Activated B cell treated with CpG ODN at 0.5 μM for 24 hours (primary cell): ENCODE measurements at regions of chr11 and their contacts with region 1.

Region 1: GRCh38 chr11:67353317-67354074 is at the start of gene POLD4:
- DNase-seq: peak; percentile 98
- ATAC-seq: peak; percentile 78
- H3K4me3 Mint-ChIP-seq: peak within 1 kb of the TSS; percentile 95
- H3K27ac Mint-ChIP-seq: peak within 1 kb of the TSS; percentile 99
- H3K4me1 Mint-ChIP-seq: peaks cover 89% of the 10 kb centered on the region
- H3K27me3 Mint-ChIP-seq: no peaks in the 10 kb centered on the region
- CTCF ChIP-seq: no peak
- total RNA-seq, gene POLD4: 166 and 169 TPM in 2 replicates

Region 2: DNA sequence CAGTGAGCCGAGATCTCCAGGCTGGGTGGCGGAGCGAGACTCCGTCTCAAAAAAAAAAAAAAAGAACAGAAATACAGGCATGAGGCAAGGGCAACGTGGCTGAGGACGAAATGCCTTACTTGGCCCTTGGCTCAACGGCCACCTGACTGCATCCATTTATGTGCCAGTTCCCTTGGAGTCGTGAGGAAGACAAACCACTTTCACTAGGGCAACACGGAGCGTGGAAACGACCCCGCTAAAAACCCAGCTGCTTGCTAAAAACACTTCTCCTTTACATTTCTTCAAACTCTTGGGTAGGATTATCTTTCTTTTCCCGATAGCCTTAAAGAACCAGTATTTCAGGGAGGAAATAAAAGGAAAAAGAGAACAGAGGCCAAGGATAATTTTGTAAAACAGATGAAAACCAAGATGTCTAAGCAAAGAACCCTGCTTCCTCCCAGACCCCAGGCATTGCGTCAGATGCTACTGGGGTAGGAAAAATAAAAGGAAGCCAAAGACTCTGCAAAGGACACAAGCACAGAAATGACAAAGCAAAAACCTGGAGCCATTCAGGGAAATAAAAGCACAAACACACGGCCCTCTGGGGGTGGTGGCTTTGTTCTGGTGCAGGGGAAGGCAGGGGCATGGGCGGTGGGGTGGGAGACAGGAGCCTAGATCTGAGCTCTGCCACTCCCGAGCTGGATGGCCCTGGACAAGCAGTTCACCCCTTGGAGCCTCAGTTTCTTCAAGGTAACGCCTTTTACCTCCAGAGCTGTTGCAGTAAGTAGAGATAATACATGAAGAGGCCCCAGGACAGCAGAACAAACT is 432.3 kb before region 1 on chr11:
- CTCF ChIA-PET with region 1: no interaction called
- POLR2A ChIA-PET with region 1: no interaction called
- intact Hi-C with region 1: no loop called
- DNase-seq: no peak
- ATAC-seq: no peak
- H3K4me3 Mint-ChIP-seq: no peak overlapping the region
- H3K27ac Mint-ChIP-seq: no peak overlapping the region
- H3K4me1 Mint-ChIP-seq: no peaks in the 10 kb centered on the region
- H3K27me3 Mint-ChIP-seq: peaks cover 6% of the 10 kb centered on the region
- CTCF ChIP-seq: no peak

Region 3: DNA sequence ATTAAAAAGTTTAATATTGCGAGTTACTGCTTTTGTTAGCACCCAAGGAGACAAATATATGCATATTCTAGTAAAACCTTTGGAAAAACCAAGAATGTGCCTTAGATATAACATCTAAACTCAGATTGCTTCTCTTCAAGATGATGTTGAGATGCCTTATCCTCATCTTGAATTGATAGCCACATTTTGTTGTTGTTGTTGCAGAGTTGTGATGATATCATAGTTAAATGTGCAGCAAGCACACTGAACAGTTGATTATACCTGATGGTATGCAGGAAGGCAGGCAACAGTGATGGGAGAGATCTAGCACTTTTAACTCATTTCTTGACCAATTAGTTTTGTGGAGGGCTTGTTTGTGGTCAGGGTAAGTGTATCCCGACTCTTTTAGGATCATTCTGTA is 186.4 kb before region 1 on chr11:
- CTCF ChIA-PET with region 1: no interaction called
- POLR2A ChIA-PET with region 1: no interaction called
- intact Hi-C with region 1: no loop called
- DNase-seq: no peak
- ATAC-seq: no peak
- H3K4me3 Mint-ChIP-seq: no peak overlapping the region
- H3K27ac Mint-ChIP-seq: no peak overlapping the region
- H3K4me1 Mint-ChIP-seq: peaks cover 40% of the 10 kb centered on the region
- H3K27me3 Mint-ChIP-seq: no peaks in the 10 kb centered on the region
- CTCF ChIP-seq: no peak

Region 4: DNA sequence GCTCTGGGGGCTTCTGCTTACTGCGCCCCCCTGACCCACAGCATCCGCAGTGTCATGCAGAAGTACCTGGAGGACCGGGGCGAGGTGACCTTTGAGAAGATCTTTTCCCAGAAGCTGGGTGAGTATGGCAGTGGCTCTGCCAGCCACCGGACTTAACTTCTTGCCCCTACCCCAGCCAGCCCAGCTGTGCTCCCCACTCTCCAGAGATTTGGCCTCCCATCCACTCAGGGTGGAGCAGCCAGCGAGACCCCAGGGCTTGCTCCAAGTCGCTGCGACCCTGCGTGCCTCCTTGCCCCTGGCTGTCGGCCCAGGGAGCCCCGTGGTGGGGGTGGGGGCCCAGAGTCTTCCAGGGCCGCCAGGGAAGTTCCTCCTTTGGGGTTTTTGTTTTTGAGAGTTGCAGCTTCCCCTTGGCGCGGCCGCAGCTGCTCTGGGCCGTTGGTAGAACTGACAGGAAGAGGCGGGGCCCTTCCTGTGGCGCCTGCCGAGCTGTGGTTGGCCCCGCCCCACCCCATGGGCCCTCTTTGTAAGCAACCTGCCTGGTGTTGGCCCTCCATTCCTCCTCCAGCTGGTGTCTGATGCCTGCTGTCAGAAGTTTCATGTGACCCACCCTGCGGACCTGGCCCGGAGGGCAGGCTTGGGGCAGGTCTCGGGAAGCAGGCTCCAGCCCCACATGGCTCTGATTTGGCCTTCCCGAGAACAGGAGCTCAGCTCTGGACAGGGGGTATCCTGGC is 76.1 kb before region 1 on chr11:
- CTCF ChIA-PET with region 1: no interaction called
- POLR2A ChIA-PET with region 1: interaction called, 31 read pairs
- intact Hi-C with region 1: no loop called
- DNase-seq: peak; percentile 85
- ATAC-seq: peak; percentile 93
- H3K4me3 Mint-ChIP-seq: peak overlapping the region; percentile 59
- H3K27ac Mint-ChIP-seq: peak overlapping the region; percentile 98
- H3K4me1 Mint-ChIP-seq: peaks cover 85% of the 10 kb centered on the region
- H3K27me3 Mint-ChIP-seq: no peaks in the 10 kb centered on the region
- CTCF ChIP-seq: no peak

Region 5: DNA sequence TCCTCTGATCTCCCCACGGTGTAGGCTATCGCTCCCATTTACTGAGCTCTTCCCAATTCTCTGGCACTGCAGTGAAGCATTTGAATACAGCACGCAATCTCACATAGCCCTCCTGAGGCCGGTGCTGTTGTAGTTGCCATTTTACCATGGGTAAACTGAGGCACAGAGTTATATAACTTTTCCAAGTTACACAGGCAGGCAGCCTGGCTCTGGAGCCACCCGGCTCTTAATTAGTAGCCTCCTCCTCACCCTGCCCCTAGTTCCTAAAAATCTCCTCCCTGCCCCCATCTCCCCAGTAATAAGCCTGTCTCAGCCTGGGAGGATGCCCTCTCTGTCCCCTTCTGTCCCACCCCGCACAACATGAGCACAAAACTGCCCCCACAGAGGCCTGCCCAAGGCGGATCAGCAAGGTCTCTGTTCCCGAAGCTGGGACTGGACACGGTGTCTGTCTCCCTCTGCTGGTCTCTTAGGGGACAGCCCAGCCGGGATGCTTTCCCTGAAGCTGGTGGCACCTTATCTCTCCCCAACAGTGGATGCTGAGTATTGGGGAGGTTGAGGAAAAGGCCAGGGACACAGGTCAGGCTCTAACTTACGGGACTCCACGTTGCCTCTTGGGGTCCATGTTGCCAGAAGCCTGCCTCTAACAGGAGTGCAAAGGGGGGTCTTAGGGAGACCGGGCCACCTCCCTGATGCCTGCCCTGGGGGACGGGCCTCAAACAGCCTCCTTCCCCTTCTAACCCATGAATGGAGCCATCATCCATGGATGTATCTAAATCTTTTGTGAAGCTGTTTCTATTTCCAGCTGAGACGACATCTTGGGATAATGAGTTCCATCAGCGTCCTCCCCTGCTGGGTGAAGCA is 29.0 kb after region 1 on chr11:
- CTCF ChIA-PET with region 1: interaction called, 735 read pairs
- POLR2A ChIA-PET with region 1: interaction called, 1,307 read pairs
- intact Hi-C with region 1: loop called (anchors 1 kb)
- DNase-seq: peak; percentile 75
- ATAC-seq: peak; percentile 80
- H3K4me3 Mint-ChIP-seq: peak overlapping the region; percentile 70
- H3K27ac Mint-ChIP-seq: peak overlapping the region; percentile 90
- H3K4me1 Mint-ChIP-seq: peaks cover 31% of the 10 kb centered on the region
- H3K27me3 Mint-ChIP-seq: no peaks in the 10 kb centered on the region
- CTCF ChIP-seq: peak; percentile 47

Region 6: DNA sequence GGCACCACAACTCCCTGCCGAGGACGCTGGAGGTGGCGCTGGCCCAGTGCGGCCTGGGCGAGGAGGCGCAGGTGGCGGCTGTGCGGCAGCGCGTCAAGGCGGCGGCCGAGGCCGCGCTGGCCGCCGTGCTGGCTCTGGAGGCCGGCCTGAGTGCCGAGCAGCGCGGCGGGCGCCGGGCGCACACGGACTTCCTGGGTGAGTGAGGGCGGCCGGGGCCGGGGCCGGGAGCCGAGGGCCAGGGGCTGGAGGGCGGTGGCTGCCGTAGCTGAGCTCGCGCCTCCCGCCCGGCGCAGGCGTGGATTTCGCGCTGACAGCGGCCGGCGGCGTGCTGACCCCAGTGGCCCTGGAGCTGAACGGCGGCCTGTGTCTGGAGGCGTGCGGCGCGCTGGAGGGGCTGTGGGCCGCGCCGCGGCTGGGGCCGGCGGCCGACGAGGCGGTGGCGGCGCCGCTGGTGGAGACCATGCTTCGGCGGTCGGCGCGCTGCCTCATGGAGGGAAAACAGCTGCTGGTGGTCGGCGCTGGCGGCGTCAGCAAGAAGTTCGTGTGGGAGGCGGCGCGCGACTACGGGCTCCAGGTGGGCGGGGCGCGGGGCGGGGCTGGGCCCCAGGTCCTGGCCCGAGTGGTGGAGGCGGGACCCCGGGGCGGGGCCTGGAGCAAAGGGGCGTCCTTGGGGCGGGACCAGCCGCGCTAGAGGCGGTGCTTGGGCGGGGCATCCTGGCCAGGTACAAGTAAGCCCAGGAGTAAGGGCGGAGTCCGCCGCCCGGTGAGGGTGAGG is 67.3 kb after region 1 on chr11:
- CTCF ChIA-PET with region 1: interaction called, 4 read pairs
- POLR2A ChIA-PET with region 1: interaction called, 27 read pairs
- intact Hi-C with region 1: no loop called
- DNase-seq: peak; percentile 98
- ATAC-seq: peak; percentile 85
- H3K4me3 Mint-ChIP-seq: peak overlapping the region; percentile 79
- H3K27ac Mint-ChIP-seq: peak overlapping the region; percentile 83
- H3K4me1 Mint-ChIP-seq: peaks cover 52% of the 10 kb centered on the region
- H3K27me3 Mint-ChIP-seq: no peaks in the 10 kb centered on the region
- CTCF ChIP-seq: no peak

Region 7: GRCh38 chr11:67482825-67483798 is 129.6 kb after region 1 on chr11 and contains the start of gene AIP:
- CTCF ChIA-PET with region 1: no interaction called
- POLR2A ChIA-PET with region 1: interaction called, 15 read pairs
- intact Hi-C with region 1: loop called (anchors 1 kb)
- DNase-seq: peak; percentile 87
- ATAC-seq: peak; percentile 85
- H3K4me3 Mint-ChIP-seq: peak within 1 kb of the TSS; percentile 93
- H3K27ac Mint-ChIP-seq: peak within 1 kb of the TSS; percentile 98
- H3K4me1 Mint-ChIP-seq: peaks cover 58% of the 10 kb centered on the region
- H3K27me3 Mint-ChIP-seq: no peaks in the 10 kb centered on the region
- CTCF ChIP-seq: no peak
- total RNA-seq, gene AIP: 108 and 114 TPM in 2 replicates

Region 8: DNA sequence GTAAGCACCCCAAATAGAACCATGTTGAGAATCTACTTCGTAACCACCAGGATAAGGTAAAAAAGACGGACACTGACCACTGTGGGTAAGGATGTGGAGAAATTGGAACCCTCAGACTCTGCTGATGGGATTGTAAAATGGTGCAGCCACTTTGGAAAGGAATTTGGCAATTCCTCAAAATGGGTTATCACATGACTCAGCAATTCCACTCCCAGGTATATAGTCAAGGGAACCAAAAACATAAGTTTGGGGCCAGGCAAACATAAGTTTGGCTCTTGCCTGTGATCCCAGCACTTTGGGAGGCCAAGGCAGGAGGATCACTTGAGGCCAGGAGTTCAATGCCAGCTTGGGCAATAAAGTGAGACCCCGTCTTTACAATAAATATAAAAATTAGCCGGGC is 174.9 kb after region 1 on chr11:
- CTCF ChIA-PET with region 1: no interaction called
- POLR2A ChIA-PET with region 1: no interaction called
- intact Hi-C with region 1: no loop called
- DNase-seq: no peak
- ATAC-seq: no peak
- H3K4me3 Mint-ChIP-seq: no peak overlapping the region
- H3K27ac Mint-ChIP-seq: no peak overlapping the region
- H3K4me1 Mint-ChIP-seq: no peaks in the 10 kb centered on the region
- H3K27me3 Mint-ChIP-seq: peaks cover 24% of the 10 kb centered on the region
- CTCF ChIP-seq: no peak

Region 9: GRCh38 chr11:67630228-67630942 is 276.9 kb after region 1 on chr11:
- CTCF ChIA-PET with region 1: no interaction called
- POLR2A ChIA-PET with region 1: interaction called, 6 read pairs
- intact Hi-C with region 1: loop called (anchors 5 kb)
- DNase-seq: peak; percentile 92
- ATAC-seq: peak; percentile 78
- H3K4me3 Mint-ChIP-seq: peak overlapping the region; percentile 87
- H3K27ac Mint-ChIP-seq: peak overlapping the region; percentile 88
- H3K4me1 Mint-ChIP-seq: peaks cover 13% of the 10 kb centered on the region
- H3K27me3 Mint-ChIP-seq: no peaks in the 10 kb centered on the region
- CTCF ChIP-seq: no peak